MCF 10A (cell line): ENCODE measurements at regions of chr1 and their contacts with region 1.

Region 1: DNA sequence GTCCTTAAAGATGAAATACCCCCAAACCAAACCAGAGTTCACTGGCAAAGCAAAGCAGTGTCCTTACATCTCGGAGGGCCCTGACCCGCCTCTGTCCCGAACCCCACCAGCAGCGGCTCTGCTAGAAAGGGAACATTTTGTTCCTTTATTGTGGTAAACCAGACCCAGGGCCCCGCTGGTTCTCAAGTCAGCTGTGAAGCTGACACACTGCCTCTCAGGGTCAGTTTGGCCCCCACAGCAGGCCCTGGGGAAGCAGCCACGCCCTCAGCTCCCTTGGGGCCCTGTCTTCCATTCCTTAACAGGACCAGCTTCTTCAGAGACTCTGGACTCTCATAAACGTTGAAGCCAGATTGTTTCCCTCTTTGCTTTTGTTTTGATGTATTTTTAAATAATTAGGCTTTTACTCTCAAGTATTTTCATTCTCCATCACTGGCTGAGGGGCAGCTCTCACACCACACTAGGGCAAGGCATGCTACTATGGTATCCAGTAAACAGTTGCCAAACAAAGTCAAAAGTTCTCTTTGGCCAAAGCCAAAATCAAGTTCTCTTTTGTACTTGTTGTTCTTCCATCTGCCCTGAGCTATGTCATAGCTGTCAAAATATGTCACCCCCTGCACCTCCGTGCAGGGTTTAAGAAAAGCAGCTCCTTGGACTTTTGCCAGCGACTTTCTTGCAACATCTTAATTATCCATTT is 61.1 kb upstream of the ANGPTL1 start:
- DNase-seq: peak; percentile 52
- H3K4me3 Mint-ChIP-seq: no peak overlapping the region
- H3K27ac Mint-ChIP-seq: peak overlapping the region; percentile 55
- H3K4me1 Mint-ChIP-seq: peaks cover 4% of the 10 kb centered on the region
- H3K27me3 Mint-ChIP-seq: no peaks in the 10 kb centered on the region
- CTCF ChIP-seq: no peak

Region 2: GRCh38 chr1:178953034-178953433 is 21.0 kb after region 1 on chr1:
- CTCF ChIA-PET with region 1: interaction called, 4 read pairs
- POLR2A ChIA-PET with region 1: interaction called, 12 read pairs
- intact Hi-C with region 1: no loop called
- DNase-seq: no peak
- H3K4me3 Mint-ChIP-seq: no peak overlapping the region
- H3K27ac Mint-ChIP-seq: no peak overlapping the region
- H3K4me1 Mint-ChIP-seq: peaks cover 6% of the 10 kb centered on the region
- H3K27me3 Mint-ChIP-seq: no peaks in the 10 kb centered on the region
- CTCF ChIP-seq: no peak

Region 3: GRCh38 chr1:179164494-179164893 is 232.5 kb after region 1 on chr1:
- CTCF ChIA-PET with region 1: no interaction called
- POLR2A ChIA-PET with region 1: no interaction called
- intact Hi-C with region 1: no loop called
- DNase-seq: peak; percentile 47
- H3K4me3 Mint-ChIP-seq: no peak overlapping the region
- H3K27ac Mint-ChIP-seq: no peak overlapping the region
- H3K4me1 Mint-ChIP-seq: peaks cover 12% of the 10 kb centered on the region
- H3K27me3 Mint-ChIP-seq: no peaks in the 10 kb centered on the region
- CTCF ChIP-seq: no peak